Panc1 (cell line): ENCODE measurements at regions of chr16 and their contacts with region 1.

Region 1: GRCh38 chr16:67833418-67834241 is 8.5 kb upstream of the THAP11 start:
- DNase-seq: peak; percentile 68
- ATAC-seq: peak; percentile 99
- H3K4me3 ChIP-seq: peak overlapping the region; percentile 81 to 82
- H3K27ac ChIP-seq: peak overlapping the region; percentile 87
- H3K4me1 ChIP-seq: peaks cover 9% of the 10 kb centered on the region; the same call in 1 of the 2 replicates
- H3K27me3 ChIP-seq: no peaks in the 10 kb centered on the region
- CTCF ChIP-seq: no peak

Region 2: GRCh38 chr16:67521095-67521804 is 312.4 kb before region 1 on chr16:
- CTCF ChIA-PET with region 1: interaction called, 11 read pairs
- POLR2A ChIA-PET with region 1: no interaction called
- in situ Hi-C with region 1: no loop called
- intact Hi-C with region 1: no loop called
- DNase-seq: peak; percentile 85
- ATAC-seq: peak; percentile 96
- H3K4me3 ChIP-seq: peak overlapping the region; percentile 52 to 72
- H3K27ac ChIP-seq: peak overlapping the region; percentile 85
- H3K4me1 ChIP-seq: no peaks in the 10 kb centered on the region; the same call in 1 of the 2 replicates
- H3K27me3 ChIP-seq: no peaks in the 10 kb centered on the region
- CTCF ChIP-seq: peak; percentile 94

Region 3: DNA sequence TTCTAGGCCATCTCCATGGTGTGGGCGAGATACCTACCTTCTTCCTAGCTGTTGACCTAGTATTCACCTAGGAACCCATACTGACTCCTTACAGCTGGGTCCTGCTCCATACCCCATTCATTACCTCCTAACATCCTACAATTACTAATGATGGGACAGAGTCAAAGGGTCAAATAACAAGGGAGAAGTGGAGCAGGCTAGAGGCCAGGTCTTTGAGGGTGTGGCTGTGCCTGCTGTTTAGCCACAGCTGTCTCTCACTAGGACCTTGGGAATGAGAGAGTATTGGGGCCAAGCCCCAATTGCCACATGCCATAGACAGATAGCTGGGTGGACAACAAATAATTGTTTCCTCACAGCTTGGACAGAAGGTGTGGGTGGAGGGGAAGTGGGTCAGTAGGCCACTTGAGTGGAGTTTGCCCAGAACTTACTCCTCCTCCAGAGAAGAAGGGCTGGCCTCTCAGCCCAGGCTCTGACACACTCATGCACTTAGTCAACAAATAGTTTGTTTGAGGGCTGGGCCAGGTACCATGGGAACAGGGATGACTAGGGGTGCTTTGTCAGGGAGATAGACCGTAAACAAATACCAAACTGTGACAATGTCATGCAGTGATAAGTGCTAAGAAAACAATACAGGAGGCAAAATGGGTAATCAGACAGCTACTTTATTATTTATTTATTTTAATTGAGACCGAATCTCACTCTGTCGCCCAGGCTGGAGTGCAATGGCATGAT is 24.0 kb after region 1 on chr16:
- CTCF ChIA-PET with region 1: no interaction called
- POLR2A ChIA-PET with region 1: no interaction called
- in situ Hi-C with region 1: no loop called
- intact Hi-C with region 1: no loop called
- DNase-seq: peak; percentile 78
- ATAC-seq: peak; percentile 86
- H3K4me3 ChIP-seq: no peak overlapping the region
- H3K27ac ChIP-seq: no peak overlapping the region
- H3K4me1 ChIP-seq: peaks cover 15% of the 10 kb centered on the region
- H3K27me3 ChIP-seq: no peaks in the 10 kb centered on the region
- CTCF ChIP-seq: no peak